Activated B cell treated with CpG ODN at 0.5 μM for 24 hours (primary cell): ENCODE measurements at regions of chr6 and their contacts with region 1.

Region 1: DNA sequence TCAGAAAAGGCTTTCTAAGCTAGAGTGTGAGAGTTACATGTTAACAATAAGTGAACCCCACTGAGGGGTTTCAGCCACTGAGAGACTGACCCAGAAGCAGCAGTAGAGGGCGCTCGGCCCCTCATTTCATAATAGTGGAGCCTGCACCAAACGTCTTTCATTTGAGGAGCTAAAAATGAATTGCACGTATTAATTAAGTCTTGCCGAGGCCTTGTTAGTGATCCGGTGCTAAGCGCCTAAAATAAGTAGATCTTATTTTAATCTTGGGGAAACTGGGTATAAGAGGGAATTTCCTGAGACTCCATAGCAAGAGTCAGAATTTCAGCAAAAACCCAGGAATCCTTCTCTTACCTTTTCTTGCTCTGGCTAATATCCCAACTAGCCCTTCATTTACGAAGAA is 209.7 kb downstream of the FARS2 start:
- DNase-seq: peak; percentile 24
- ATAC-seq: peak; percentile 70
- H3K4me3 Mint-ChIP-seq: no peak overlapping the region
- H3K27ac Mint-ChIP-seq: no peak overlapping the region
- H3K4me1 Mint-ChIP-seq: no peaks in the 10 kb centered on the region
- H3K27me3 Mint-ChIP-seq: no peaks in the 10 kb centered on the region
- CTCF ChIP-seq: no peak

Region 2: DNA sequence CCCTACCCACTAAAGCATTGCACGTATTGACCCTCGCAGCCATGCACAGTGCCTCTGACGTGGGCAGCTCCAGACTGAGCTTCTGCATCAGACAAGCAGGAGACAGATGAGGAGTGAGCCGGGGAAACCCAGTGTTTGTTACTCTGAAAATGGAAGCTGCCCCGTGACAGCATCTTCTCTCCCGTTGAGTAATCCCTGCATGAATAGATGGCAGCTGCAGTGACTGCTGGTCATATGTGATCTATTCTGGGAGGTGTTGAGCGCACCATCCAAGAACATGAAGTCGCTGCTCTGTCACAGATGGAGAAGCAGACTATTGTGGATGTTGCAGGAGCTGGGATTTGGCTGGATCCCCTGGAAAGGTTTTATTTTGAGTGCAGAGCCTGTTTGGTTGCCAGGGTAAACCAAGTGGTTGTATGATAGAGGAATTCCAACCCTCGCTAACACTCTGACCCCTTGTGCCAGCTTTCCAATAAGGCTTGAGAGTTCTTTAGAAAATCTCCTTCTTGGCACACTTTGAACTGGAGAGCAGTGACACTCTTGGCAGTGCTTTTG is 293.4 kb after region 1 on chr6:
- CTCF ChIA-PET with region 1: interaction called, 13 read pairs
- POLR2A ChIA-PET with region 1: no interaction called
- intact Hi-C with region 1: loop called (anchors 2 kb)
- DNase-seq: no peak
- ATAC-seq: peak; percentile 38
- H3K4me3 Mint-ChIP-seq: no peak overlapping the region
- H3K27ac Mint-ChIP-seq: no peak overlapping the region
- H3K4me1 Mint-ChIP-seq: peaks cover 40% of the 10 kb centered on the region
- H3K27me3 Mint-ChIP-seq: no peaks in the 10 kb centered on the region
- CTCF ChIP-seq: no peak

Region 3: DNA sequence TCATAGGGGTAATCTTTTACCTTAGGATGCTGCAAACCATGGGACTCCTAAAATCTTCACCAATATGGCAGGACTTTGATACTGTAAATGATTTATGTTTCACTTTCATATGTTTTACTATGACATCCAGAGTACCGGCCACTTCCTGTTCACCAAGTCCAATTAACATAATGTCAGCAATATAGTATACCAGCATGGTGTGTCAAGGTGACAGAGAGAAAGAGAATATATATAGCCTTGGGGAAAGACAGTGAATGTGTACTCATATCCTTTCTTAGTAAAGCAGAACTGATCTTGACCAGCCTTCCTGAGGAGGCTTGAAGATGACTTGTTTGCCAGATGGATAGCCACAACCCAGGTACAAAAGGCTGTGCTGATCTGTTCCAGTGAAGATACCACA is 407.7 kb after region 1 on chr6:
- CTCF ChIA-PET with region 1: no interaction called
- POLR2A ChIA-PET with region 1: no interaction called
- intact Hi-C with region 1: loop called (anchors 5 kb)
- DNase-seq: no peak
- ATAC-seq: no peak
- H3K4me3 Mint-ChIP-seq: no peak overlapping the region
- H3K27ac Mint-ChIP-seq: no peak overlapping the region
- H3K4me1 Mint-ChIP-seq: no peaks in the 10 kb centered on the region
- H3K27me3 Mint-ChIP-seq: no peaks in the 10 kb centered on the region
- CTCF ChIP-seq: no peak

Region 4: GRCh38 chr6:5898559-5898958 is 427.5 kb after region 1 on chr6:
- CTCF ChIA-PET with region 1: interaction called, 4 read pairs
- POLR2A ChIA-PET with region 1: no interaction called
- intact Hi-C with region 1: loop called (anchors 5 kb)
- DNase-seq: no peak
- ATAC-seq: no peak
- H3K4me3 Mint-ChIP-seq: no peak overlapping the region
- H3K27ac Mint-ChIP-seq: no peak overlapping the region
- H3K4me1 Mint-ChIP-seq: no peaks in the 10 kb centered on the region
- H3K27me3 Mint-ChIP-seq: no peaks in the 10 kb centered on the region
- CTCF ChIP-seq: no peak

Region 5: DNA sequence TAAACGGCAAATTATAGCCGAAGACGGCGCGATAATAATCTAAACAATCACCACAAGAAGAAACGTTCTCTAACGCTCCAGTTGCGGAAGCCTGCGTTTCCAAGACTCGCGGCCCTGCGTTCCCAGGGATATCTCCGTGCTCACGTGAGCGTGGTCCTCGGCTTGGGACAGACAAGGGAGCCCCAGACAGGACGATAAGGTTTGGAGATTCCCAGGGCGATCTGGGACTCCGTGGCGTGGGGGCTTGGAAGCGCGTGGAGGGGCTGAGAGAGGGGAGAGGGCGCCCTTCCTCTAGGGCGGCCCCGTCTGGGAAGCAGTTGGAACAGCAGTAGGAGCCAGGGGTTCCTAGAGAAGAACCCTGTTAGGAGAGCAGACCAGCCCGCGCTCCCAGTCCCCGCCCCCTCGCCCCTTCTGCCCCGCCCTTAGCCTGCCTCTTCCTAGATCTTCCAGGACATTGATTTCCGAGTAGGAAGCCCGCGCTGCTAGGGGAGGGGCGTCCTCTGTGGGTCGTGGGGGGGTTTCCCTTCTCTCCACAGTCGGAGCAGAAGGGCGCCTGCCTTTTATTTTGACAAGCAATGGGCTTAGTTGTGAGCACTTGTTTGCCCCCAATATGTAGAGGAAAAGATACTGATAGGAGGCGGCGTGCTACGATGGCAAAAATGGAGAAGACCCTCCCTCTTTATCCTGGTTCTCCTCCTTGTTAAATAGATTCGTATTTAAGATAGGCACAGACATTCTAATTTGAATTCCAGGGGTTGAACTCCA is 525.1 kb after region 1 on chr6:
- CTCF ChIA-PET with region 1: interaction called, 8 read pairs
- POLR2A ChIA-PET with region 1: no interaction called
- intact Hi-C with region 1: loop called (anchors 1 kb)
- DNase-seq: no peak
- ATAC-seq: no peak
- H3K4me3 Mint-ChIP-seq: peak overlapping the region; percentile 83
- H3K27ac Mint-ChIP-seq: peak overlapping the region; percentile 51
- H3K4me1 Mint-ChIP-seq: peaks cover 50% of the 10 kb centered on the region
- H3K27me3 Mint-ChIP-seq: peaks cover 80% of the 10 kb centered on the region
- CTCF ChIP-seq: no peak

Region 6: DNA sequence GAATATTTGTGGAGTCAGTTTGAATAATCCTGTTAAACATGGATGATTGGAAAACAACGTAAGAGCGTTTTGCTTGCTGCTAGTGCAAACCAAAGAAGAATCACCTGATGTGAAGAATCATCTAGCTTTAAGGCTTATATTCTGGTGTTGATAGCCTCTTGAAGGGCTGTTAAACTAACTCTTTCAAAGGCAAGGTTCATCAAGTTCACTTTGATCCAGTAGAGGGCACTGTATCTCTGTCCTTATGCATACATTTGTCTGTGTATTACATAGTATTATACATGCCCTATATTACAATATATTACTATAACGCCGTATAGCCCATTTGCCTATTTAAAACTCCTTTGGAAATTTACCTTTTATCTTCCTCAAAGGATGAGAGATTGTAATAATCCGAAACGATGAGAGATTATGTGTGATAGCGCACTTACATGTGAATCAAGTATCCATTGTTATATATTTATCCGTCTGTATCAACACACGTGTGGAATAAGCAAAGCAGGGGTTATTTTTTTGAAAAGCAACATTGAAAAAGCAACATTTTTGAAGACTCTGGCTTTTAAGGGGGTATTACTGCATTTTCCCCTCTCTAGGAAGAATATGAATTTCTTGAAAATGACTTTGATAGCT is 586.5 kb after region 1 on chr6:
- CTCF ChIA-PET with region 1: interaction called, 7 read pairs
- POLR2A ChIA-PET with region 1: no interaction called
- intact Hi-C with region 1: loop called (anchors 1 kb)
- DNase-seq: no peak
- ATAC-seq: peak; percentile 66
- H3K4me3 Mint-ChIP-seq: no peak overlapping the region
- H3K27ac Mint-ChIP-seq: no peak overlapping the region
- H3K4me1 Mint-ChIP-seq: no peaks in the 10 kb centered on the region
- H3K27me3 Mint-ChIP-seq: peaks cover 37% of the 10 kb centered on the region
- CTCF ChIP-seq: peak; percentile 42